ENCODE measurements at regions of chr11 and their contacts with region 1.

Region 1: GRCh38 chr11:46574656-46575055 is 19.2 kb downstream of the AMBRA1 start:
- DNase-seq: no peak
- H3K4me3 ChIP-seq: no peak overlapping the region
- H3K27ac ChIP-seq: no peak overlapping the region
- H3K4me1 ChIP-seq: no peaks in the 10 kb centered on the region
- H3K27me3 ChIP-seq: no peaks in the 10 kb centered on the region
- CTCF ChIP-seq: no peak

Region 2: GRCh38 chr11:46149342-46149741 is 425.3 kb before region 1 on chr11:
- CTCF ChIA-PET with region 1: interaction called, 10 read pairs
- POLR2A ChIA-PET with region 1: no interaction called
- intact Hi-C with region 1: no loop called
- DNase-seq: no peak
- H3K4me3 ChIP-seq: no peak overlapping the region
- H3K27ac ChIP-seq: no peak overlapping the region
- H3K4me1 ChIP-seq: 0 out of 2 replicates have a peak, but pooled peaks cover 5% of the 10 kb centered on the region
- H3K27me3 ChIP-seq: no peaks in the 10 kb centered on the region
- CTCF ChIP-seq: no peak

Region 3: GRCh38 chr11:46601129-46601528 is 26.5 kb after region 1 on chr11:
- CTCF ChIA-PET with region 1: no interaction called
- POLR2A ChIA-PET with region 1: no interaction called
- intact Hi-C with region 1: no loop called
- DNase-seq: no peak
- H3K4me3 ChIP-seq: no peak overlapping the region
- H3K27ac ChIP-seq: no peak overlapping the region
- H3K4me1 ChIP-seq: no peaks in the 10 kb centered on the region
- H3K27me3 ChIP-seq: no peaks in the 10 kb centered on the region
- CTCF ChIP-seq: no peak

Region 4: DNA sequence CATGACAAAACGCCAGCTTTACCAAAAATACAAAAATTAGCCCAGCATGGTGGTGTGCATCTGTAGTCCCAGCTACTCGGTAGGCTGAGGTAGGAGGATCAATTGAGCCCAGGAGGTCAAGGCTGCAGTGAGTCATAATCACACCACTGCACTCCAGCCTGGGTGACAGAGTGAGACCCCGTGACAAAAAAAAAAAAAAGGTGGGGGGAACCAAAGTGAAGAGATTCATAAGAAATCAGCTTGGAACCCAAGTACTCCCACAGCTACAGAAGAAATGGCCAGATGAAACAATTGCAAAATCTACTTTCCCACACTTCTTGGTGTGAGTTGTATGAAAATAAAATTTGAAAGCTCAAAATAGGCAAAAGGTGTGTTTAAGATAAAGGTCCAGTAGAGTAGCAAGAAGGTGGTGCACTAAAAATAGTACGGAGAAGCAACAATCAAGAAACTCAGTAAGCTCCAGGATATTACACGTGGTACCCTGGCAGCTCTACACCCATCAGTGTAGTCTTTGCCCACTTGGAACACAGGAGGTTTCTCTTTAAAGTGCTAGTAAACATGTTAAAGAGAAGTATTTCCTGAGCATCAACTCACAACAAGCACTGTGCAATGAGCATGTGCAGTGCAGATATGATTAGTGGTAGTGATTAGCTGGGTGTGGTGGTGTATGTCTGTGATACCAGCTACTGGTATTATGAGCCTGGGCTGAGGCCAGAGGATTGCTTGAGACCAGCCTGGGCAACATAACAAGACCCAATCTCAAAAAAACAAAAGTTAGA is 37.1 kb after region 1 on chr11:
- CTCF ChIA-PET with region 1: no interaction called
- POLR2A ChIA-PET with region 1: interaction called, 14 read pairs
- intact Hi-C with region 1: no loop called
- DNase-seq: no peak
- H3K4me3 ChIP-seq: no peak overlapping the region
- H3K27ac ChIP-seq: no peak overlapping the region
- H3K4me1 ChIP-seq: peaks cover 13% of the 10 kb centered on the region
- H3K27me3 ChIP-seq: no peaks in the 10 kb centered on the region
- CTCF ChIP-seq: no peak

Measured in PC-9 (cell line).